Ovary (tissue), 10 donors: ENCODE measurements at regions of chr3 and their contacts with region 1.

Region 1: DNA sequence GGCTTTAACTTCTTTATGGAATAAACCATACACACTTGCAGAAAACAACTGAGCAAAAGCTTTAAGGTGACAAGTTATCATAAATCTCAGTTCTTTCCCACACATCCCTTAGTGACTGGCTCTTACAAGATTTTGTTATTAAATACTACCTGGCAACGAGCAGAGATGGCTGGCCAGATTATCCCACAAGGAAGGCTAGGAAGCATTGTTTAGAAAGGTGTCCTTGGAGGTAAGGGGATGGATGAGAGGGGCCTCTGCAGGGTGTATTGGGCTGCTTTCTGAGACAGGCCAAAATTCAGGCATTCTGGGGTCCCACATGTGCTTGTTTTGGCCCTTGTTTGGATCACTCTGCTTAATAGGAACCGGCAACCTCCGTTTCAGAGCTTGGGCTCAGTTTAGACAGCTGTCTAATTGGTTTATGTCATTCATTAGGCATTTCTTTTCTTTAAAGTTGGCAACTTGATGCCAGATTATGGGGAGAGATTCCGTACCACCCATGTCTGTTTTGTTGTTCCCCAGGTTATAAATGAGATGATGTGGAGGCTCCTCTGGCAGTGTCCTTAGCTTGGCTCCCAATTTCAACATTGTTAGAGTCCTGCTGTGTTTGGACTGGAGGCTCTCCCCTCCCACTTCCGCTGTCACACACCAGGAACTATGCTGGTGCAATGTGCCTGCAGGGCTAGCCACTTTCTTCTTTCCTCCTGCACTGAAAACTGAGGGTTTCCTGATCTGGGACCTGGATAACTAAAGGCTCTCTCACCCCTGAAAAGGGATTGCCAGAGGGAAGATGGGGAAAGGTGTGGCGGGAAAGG is 121.1 kb downstream of the TPRG1 start:
- DNase-seq: no peak
- H3K4me3 ChIP-seq: no peak overlapping the region
- H3K27ac ChIP-seq: no peak overlapping the region
- H3K4me1 ChIP-seq: no peaks in the 10 kb centered on the region
- H3K27me3 ChIP-seq: no peaks in the 10 kb centered on the region
- CTCF ChIP-seq: no peak
- EP300 ChIP-seq: no peak
- POLR2A ChIP-seq: no peak

Region 2: DNA sequence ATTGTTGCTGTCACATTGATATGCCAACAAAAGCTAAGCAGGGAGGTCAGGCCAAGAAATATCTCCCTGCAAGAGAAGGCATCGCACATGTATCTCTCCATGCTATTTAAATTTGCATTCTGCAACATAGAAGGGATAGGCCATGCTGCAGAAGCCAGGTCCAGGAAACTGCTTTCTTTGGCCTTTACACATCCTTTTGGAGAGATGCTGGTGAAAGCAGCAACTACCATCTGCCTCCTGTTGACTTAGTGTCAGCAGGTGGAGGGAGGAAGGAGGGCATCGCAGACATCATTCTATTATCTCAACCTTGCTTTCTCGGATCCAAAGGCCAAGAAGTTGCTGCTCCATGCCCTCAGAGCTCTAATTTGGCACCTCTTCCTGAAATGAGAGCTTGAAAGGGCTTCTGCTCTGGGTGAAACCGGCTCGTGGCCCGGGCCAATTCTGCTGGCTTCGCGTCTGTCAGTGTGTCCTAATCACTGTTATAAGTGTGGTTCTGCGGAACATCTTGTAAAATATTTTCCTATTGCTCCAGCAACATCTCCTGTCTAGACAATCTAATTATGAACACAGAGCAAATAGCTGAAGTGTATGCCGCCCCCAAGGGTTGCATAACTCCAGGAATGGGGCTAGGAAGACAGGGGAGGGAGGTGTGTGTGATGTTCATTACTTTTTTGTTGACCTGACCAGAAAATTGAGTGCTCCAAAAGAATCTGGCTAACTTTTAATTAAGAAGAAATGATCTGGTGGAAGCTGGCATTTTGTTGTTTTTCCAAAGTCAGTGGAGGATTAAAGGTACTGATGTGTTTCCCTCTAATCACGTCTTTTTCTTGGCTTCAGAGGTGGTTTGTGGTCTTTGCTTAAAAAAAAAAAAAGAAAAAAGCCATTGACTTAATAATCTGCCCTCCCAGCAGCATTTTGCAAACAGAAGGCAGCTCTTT is 32.0 kb before region 1 on chr3:
- intact Hi-C with region 1: no loop called
- DNase-seq: peak in 2 of 5 donors; percentile 21 to 49
- H3K4me3 ChIP-seq: no peak overlapping the region
- H3K27ac ChIP-seq: no peak overlapping the region
- H3K4me1 ChIP-seq: peaks cover 4% of the 10 kb centered on the region
- H3K27me3 ChIP-seq: no peaks in the 10 kb centered on the region
- CTCF ChIP-seq: no peak
- EP300 ChIP-seq: no peak
- POLR2A ChIP-seq: no peak

Region 3: DNA sequence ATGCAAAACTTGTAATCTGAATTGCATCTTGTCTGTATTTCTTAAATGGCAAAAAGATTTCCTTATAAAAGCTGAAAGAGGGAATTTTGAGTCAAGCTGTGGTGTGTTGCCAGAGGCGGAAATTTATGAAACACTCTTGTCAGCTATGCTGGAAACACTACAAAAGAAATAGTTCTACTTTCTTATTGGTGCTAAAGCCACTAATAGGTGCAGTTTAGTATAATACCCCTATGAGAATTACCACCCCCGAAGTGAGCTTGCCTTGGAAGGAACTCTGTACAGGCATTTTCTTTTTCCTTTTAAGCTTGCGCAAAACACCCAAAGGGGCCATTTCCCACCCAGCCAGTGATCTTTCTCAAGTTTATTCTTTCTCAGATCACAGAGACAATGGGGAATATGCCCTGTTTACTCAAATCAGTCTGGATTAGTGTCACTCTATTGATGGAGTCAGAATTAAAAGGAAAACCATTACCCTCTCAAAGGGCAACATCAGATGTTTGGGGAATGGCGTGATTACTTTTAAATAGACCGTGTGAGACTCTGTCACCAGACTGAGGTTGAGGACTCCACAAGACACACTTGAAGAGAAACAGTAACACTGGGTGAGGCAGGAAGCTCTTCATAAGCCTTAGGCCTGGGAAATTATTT is 504.4 kb after region 1 on chr3:
- intact Hi-C with region 1: loop called in 1 of 4 experiments (anchors 5 kb)
- DNase-seq: no peak
- H3K4me3 ChIP-seq: no peak overlapping the region
- H3K27ac ChIP-seq: no peak overlapping the region
- H3K4me1 ChIP-seq: no peaks in the 10 kb centered on the region
- H3K27me3 ChIP-seq: no peaks in the 10 kb centered on the region
- CTCF ChIP-seq: no peak
- EP300 ChIP-seq: no peak
- POLR2A ChIP-seq: no peak